GM12878 (cell line): ENCODE measurements at regions of chr18 and their contacts with region 1.

Region 1: DNA sequence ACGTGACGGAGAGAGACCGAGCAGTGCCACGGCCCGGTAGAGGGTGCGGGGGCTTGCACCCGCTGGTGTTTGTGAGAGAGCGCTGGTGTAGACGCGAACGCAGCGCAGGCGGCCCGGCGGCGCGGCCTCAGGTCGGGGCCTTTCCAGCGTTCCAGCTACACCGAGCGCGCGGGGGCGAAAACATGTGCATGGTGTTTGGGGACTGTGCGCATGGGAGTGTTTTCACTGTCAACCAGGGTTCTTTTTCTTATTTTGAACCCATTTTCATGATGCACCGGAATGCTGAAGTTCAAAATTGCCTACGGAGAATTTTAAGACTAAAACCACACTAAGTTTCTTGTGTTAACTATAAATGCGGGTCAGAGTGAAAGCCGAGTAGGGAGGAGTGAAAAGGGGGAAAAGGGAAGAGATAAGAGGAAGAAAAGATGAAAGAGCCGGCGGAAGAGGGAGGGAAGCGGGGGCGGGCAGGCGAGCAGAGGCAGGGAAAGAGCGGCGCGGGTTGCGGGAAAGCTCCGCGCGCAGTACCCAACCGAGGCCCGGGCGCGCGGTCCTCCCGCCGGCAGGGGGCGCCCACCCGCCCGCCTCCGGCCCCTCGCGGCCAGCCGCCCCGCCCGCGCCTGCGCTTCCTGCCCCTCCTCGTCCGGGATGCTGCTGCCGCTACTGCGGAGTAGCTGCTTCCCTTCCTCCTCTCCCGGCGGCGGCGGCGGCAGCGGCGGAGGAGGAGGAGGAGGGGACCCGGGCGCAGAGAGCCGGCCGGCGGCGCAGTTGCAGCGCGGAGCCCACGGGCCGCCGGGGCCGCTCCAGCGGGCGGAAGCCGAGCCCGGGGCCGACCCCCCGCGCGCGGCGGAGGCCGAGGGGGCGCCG is at the start of gene RAB12:
- DNase-seq: no peak
- ATAC-seq: peak; percentile 65
- H3K4me3 ChIP-seq: peak within 1 kb of the TSS; percentile 99
- H3K27ac ChIP-seq: peak within 1 kb of the TSS; percentile 77
- H3K4me1 ChIP-seq: peaks cover 31% of the 10 kb centered on the region
- H3K27me3 ChIP-seq: no peaks in the 10 kb centered on the region
- CTCF ChIP-seq: peak; percentile 45 to 63 (median 45); a peak in 5 of 6 replicates
- EP300 ChIP-seq: no peak
- POLR2A ChIP-seq: peak; percentile 82
- RAD21 ChIP-seq: 0 out of 2 replicates have a peak, but pooled peaks have one; percentile 6
- polyA plus RNA-seq, gene RAB12: 0.72 to 1.5 TPM

Region 2: GRCh38 chr18:7946734-7947377 is 662.2 kb before region 1 on chr18:
- CTCF ChIA-PET with region 1: no interaction called
- POLR2A ChIA-PET with region 1: no interaction called
- RAD21 ChIA-PET with region 1: no interaction called
- SMC1A ChIA-PET with region 1: no interaction called
- in situ Hi-C with region 1: loop called (anchors 10 kb)
- intact Hi-C with region 1: no loop called
- DNase-seq: no peak
- ATAC-seq: peak; percentile 60
- H3K4me3 ChIP-seq: no peak overlapping the region
- H3K27ac ChIP-seq: no peak overlapping the region
- H3K4me1 ChIP-seq: no peaks in the 10 kb centered on the region
- H3K27me3 ChIP-seq: no peaks in the 10 kb centered on the region
- CTCF ChIP-seq: no peak
- EP300 ChIP-seq: no peak
- POLR2A ChIP-seq: no peak
- RAD21 ChIP-seq: no peak

Region 3: GRCh38 chr18:8478166-8478967 is 130.7 kb before region 1 on chr18:
- CTCF ChIA-PET with region 1: interaction called, 5 read pairs
- POLR2A ChIA-PET with region 1: no interaction called
- RAD21 ChIA-PET with region 1: interaction called, 3 read pairs
- SMC1A ChIA-PET with region 1: interaction called, 5 read pairs
- in situ Hi-C with region 1: no loop called
- intact Hi-C with region 1: loop called (anchors 1 kb)
- DNase-seq: no peak
- ATAC-seq: peak; percentile 98
- H3K4me3 ChIP-seq: no peak overlapping the region
- H3K27ac ChIP-seq: no peak overlapping the region
- H3K4me1 ChIP-seq: no peaks in the 10 kb centered on the region
- H3K27me3 ChIP-seq: no peaks in the 10 kb centered on the region; a peak in 2 of 4 replicates
- CTCF ChIP-seq: peak; percentile 82 to 97 (median 94)
- EP300 ChIP-seq: no peak
- POLR2A ChIP-seq: no peak
- RAD21 ChIP-seq: peak; percentile 75

Region 4: GRCh38 chr18:9913526-9914333 is 1304.7 kb after region 1 on chr18 and contains the start of gene VAPA:
- CTCF ChIA-PET with region 1: no interaction called
- POLR2A ChIA-PET with region 1: no interaction called
- RAD21 ChIA-PET with region 1: no interaction called
- SMC1A ChIA-PET with region 1: no interaction called
- in situ Hi-C with region 1: loop called (anchors 25 kb)
- intact Hi-C with region 1: no loop called
- DNase-seq: peak; percentile 89
- ATAC-seq: peak; percentile 91
- H3K4me3 ChIP-seq: peak within 1 kb of the TSS; percentile 97
- H3K27ac ChIP-seq: peak within 1 kb of the TSS; percentile 93
- H3K4me1 ChIP-seq: peaks cover 3% of the 10 kb centered on the region; the same call in 1 of the 2 replicates
- H3K27me3 ChIP-seq: no peaks in the 10 kb centered on the region
- CTCF ChIP-seq: no peak
- EP300 ChIP-seq: 0 out of 4 replicates have a peak, but pooled peaks of 1 of the 2 experiments have one; percentile 18
- POLR2A ChIP-seq: peak; percentile 96
- RAD21 ChIP-seq: no peak
- polyA plus RNA-seq, gene VAPA: 70.9 to 73.1 TPM